ENCODE measurements at regions of chr3 and their contacts with region 1.

Region 1: DNA sequence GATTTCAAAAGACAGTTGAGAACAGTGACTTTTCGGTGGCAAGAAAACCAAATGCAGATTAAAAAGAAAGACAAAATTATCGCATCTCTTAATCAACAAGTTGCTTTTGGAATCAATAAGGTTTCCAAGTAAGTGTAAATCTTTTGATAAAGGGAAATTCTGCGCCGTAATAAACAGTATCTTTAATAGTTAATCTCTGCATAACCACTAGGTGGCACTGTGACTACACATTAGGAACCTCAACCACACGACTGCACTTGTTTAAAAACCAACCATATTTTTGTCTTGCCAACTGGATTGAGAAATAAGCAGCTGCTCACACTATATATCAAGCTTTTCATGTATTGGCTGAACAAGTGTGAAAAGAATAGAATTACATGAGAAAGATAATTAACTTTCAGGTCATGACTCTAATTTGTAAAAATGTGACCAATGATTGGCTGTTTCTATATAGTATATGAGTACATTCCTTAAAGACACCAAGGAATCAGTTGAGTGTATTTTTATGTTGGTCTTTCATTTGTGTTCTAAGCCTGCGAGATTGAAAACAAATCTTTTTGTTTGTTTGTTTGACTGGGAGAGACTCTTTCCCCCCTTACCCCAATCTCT is 72.7 kb downstream of the DZIP3 start:
- DNase-seq: peak in 3 of 6 donors; percentile 20 to 39 (median 33)
- ATAC-seq: peak; percentile 92 to 100 (median 98)
- H3K4me3 ChIP-seq: no peak overlapping the region
- H3K27ac ChIP-seq: no peak overlapping the region
- H3K4me1 ChIP-seq: peaks cover 3 to 6% (median 5%) of the 10 kb centered on the region in 3 donors
- H3K27me3 ChIP-seq: no peaks in the 10 kb centered on the region
- CTCF ChIP-seq: peak; percentile 60 to 87 (median 62)

Region 2: DNA sequence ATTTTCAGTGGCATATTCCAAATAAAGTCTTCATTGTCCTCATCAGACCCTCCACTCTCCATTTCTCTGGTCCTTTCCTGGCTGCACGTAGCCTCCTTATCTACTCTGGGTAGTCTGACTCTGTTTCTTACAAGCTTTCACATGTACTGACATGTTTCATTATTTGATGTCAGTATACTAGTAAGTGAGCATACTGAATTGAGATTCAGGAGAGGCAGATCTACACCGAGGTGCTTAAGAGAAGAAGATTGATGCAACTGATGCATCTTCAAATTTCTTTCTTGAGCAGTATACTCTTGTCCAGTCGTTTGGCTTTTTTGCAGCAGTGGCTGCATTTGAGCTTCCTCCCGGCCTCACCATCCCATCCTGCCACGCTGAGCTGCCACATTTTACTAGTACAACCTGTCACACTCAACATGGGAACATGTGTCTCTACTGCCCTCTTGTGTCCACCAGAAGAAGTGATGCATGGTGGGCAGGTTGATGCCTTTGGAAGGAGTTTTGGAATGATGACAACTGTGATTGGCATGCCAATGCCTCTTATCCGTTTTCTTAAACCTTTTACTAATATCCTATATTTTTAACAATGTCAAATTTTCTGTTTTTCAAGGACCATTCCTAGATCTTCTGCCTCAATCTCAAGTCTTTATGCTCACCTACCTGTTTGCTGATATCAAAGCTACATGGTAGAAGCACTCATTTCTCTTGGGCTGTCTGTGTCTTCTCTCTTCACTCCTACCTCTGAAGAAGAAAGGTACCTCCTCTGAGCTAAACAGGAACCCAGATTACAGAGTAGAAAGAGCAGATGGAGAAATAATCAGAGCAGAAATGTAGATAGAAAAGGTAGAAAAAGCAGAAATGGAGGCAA is 252.8 kb after region 1 on chr3:
- intact Hi-C with region 1: loop called in 1 of 3 experiments (anchors 10 kb)
- DNase-seq: peak in 4 of 6 donors; percentile 33 to 67 (median 38)
- ATAC-seq: peak; percentile 87 to 98 (median 96)
- H3K4me3 ChIP-seq: no peak overlapping the region
- H3K27ac ChIP-seq: no peak overlapping the region
- H3K4me1 ChIP-seq: no peaks in the 10 kb centered on the region
- H3K27me3 ChIP-seq: no peaks in the 10 kb centered on the region
- CTCF ChIP-seq: peak; percentile 63 to 80 (median 76)

Region 3: GRCh38 chr3:109091846-109092245 is 429.6 kb after region 1 on chr3:
- intact Hi-C with region 1: loop called in 1 of 3 experiments (anchors 5 kb)
- DNase-seq: no peak
- ATAC-seq: no peak
- H3K4me3 ChIP-seq: no peak overlapping the region
- H3K27ac ChIP-seq: no peak overlapping the region
- H3K4me1 ChIP-seq: no peaks in the 10 kb centered on the region
- H3K27me3 ChIP-seq: no peaks in the 10 kb centered on the region
- CTCF ChIP-seq: no peak

Measured in pancreas (tissue), 10 donors.